Naive thymus-derived CD4-positive, alpha-beta T cell (primary cell): ENCODE measurements at regions of chr5 and their contacts with region 1.

Region 1: GRCh38 chr5:111113678-111114077 is 21.5 kb downstream of the WDR36 start:
- DNase-seq: no peak
- ATAC-seq: no peak
- H3K4me3 ChIP-seq: no peak overlapping the region
- H3K4me3 Mint-ChIP-seq: no peak overlapping the region
- H3K27ac ChIP-seq: no peak overlapping the region
- H3K27ac Mint-ChIP-seq: no peak overlapping the region
- H3K4me1 ChIP-seq: no peaks in the 10 kb centered on the region
- H3K4me1 Mint-ChIP-seq: peaks cover 0 to 9% (median 0%) of the 10 kb centered on the region in 7 donors
- H3K27me3 ChIP-seq: no peaks in the 10 kb centered on the region
- H3K27me3 Mint-ChIP-seq: no peaks in the 10 kb centered on the region

Region 2: DNA sequence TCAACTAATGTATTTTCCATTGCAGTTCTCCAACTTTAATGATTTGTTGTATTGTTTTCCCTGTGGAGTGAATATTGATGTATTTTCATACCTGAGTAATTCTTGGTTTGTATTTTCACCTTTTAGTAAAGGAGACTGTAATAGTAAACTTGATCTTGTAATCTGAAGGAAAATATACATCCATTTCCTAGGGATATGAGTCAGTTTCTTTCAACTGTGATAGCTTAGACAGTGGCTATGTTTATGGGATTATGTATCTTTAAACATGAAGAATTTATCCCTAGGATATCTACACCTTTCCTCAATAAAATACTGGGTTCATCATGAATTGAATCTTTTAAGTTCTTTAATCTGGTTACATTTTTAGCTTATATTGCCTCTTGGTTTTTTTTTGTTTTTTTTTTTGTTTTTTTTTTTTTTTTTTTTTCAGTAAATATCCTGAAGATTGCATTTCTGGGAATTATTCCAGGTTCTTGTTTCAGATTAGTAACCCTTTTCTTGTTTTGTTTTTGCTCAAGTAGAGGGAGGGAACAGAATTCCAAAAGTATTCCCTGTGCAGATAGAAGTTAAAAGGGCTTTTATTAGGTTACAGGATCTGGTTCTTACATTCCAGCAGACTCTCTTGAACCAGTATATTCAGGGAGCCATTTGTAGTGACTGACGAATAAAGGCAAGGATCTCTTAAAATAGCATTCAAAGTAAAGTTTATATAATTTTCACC is 14.5 kb before region 1 on chr5:
- CTCF ChIA-PET with region 1: no interaction called
- POLR2A ChIA-PET with region 1: no interaction called
- intact Hi-C with region 1: loop called in 1 of 2 experiments (anchors 2 kb)
- DNase-seq: no peak
- ATAC-seq: no peak
- H3K4me3 ChIP-seq: no peak overlapping the region
- H3K4me3 Mint-ChIP-seq: no peak overlapping the region
- H3K27ac ChIP-seq: no peak overlapping the region
- H3K27ac Mint-ChIP-seq: no peak overlapping the region
- H3K4me1 ChIP-seq: peaks cover 0 to under 1% of the 10 kb centered on the region in 2 donors
- H3K4me1 Mint-ChIP-seq: peaks cover 8 to 31% (median 26%) of the 10 kb centered on the region in 7 donors
- H3K27me3 ChIP-seq: no peaks in the 10 kb centered on the region
- H3K27me3 Mint-ChIP-seq: no peaks in the 10 kb centered on the region